Uterus (tissue), 4 donors: ENCODE measurements at regions of chr12 and their contacts with region 1.

Region 1: DNA sequence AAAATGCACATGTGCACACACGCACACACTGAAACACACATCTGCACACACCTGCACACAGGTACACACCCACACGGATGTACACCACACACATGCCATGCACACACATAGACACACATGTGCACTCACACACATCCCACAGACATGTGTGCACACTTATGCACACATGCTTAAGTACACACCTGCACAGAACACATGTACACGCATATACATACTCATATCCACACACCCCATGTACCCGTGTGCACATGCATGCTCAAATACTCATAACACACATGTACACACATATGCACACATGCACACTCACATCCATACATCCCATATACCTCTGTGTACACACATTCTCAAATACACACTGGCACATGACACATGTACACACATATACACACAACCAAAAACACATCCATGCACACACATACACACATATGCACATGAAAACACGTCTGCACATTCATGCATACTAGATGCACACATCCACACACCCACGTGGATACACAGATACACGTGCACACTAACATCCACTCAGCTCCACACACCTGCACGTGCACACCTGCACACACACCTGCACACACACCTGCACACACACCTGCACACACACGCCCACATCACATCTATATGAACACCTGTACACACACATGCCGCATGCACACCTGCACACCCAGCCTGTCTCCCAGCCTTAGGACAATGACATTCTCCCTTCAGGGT is 336.7 kb downstream of the ADGRD1 start:
- DNase-seq: peak in 1 of 2 donors; percentile 1
- H3K4me3 ChIP-seq: no peak overlapping the region
- H3K27ac ChIP-seq: no peak overlapping the region
- H3K4me1 ChIP-seq: no peaks in the 10 kb centered on the region
- H3K27me3 ChIP-seq: no peaks in the 10 kb centered on the region
- CTCF ChIP-seq: no peak
- POLR2A ChIP-seq: no peak

Region 2: GRCh38 chr12:131142891-131143657 is 147.3 kb before region 1 on chr12:
- intact Hi-C with region 1: no loop called
- DNase-seq: no peak
- H3K4me3 ChIP-seq: no peak overlapping the region
- H3K27ac ChIP-seq: no peak overlapping the region
- H3K4me1 ChIP-seq: no peaks in the 10 kb centered on the region
- H3K27me3 ChIP-seq: no peaks in the 10 kb centered on the region
- CTCF ChIP-seq: no peak
- POLR2A ChIP-seq: no peak

Region 3: GRCh38 chr12:131260954-131261353 is 29.5 kb before region 1 on chr12:
- intact Hi-C with region 1: no loop called
- DNase-seq: no peak
- H3K4me3 ChIP-seq: no peak overlapping the region
- H3K27ac ChIP-seq: no peak overlapping the region
- H3K4me1 ChIP-seq: no peaks in the 10 kb centered on the region
- H3K27me3 ChIP-seq: no peaks in the 10 kb centered on the region
- CTCF ChIP-seq: no peak
- POLR2A ChIP-seq: no peak

Region 4: DNA sequence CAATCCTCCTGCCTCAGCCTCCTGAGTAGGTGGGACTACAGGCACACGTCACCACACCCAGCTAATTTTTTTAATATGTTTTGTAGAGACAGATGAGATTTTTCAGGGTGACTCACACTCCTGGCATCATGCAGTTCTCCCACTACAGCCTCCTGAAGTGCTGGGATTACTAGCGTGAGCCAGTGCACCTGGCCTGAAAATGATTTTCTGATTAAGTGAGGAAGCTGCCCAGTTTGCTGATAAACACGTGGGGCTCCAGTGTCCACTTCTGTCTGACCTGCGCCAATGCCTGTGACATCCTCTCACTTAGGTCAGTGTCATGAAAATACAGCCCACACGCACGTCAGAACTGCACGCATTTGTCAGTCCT is 383.5 kb after region 1 on chr12:
- intact Hi-C with region 1: loop called (anchors 10 kb)
- DNase-seq: no peak
- H3K4me3 ChIP-seq: no peak overlapping the region
- H3K27ac ChIP-seq: no peak overlapping the region
- H3K4me1 ChIP-seq: no peaks in the 10 kb centered on the region
- H3K27me3 ChIP-seq: no peaks in the 10 kb centered on the region
- CTCF ChIP-seq: no peak
- POLR2A ChIP-seq: no peak